GM12878 (cell line): ENCODE measurements at regions of chr9 and their contacts with region 1.

Region 1: GRCh38 chr9:2857564-2858198 is 13.8 kb upstream of the PUM3 start:
- DNase-seq: peak; percentile 37
- ATAC-seq: peak; percentile 98
- H3K4me3 ChIP-seq: no peak overlapping the region
- H3K27ac ChIP-seq: no peak overlapping the region
- H3K4me1 ChIP-seq: no peaks in the 10 kb centered on the region
- H3K27me3 ChIP-seq: peaks cover 0 to 1% of the 10 kb centered on the region in 2 experiments; a peak in 1 of 4 replicates
- CTCF ChIP-seq: peak; percentile 80 to 93 (median 80)
- EP300 ChIP-seq: no peak
- POLR2A ChIP-seq: no peak
- RAD21 ChIP-seq: peak; percentile 76

Region 2: DNA sequence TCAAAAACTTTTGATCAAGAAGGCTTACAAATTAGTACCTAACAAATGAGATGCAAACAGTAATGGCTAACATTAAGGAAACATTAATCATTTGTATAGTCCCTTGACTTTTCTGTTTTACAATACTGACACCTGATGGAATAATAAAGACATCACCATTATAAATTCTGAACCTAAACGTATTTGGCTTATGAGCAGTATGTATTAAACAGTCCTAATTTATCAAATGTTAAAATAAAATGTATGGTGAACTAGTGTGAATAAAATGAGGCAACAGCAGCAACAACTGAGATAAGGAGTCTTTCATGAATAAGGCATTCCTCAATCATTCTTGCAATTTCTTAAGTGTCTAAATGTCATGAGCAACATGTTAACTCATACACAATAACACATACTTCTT is 19.8 kb before region 1 on chr9:
- CTCF ChIA-PET with region 1: interaction called, 25 read pairs
- POLR2A ChIA-PET with region 1: no interaction called
- RAD21 ChIA-PET with region 1: interaction called, 3 read pairs
- SMC1A ChIA-PET with region 1: no interaction called
- in situ Hi-C with region 1: no loop called
- intact Hi-C with region 1: no loop called
- DNase-seq: no peak
- ATAC-seq: peak; percentile 43
- H3K4me3 ChIP-seq: no peak overlapping the region
- H3K27ac ChIP-seq: no peak overlapping the region
- H3K4me1 ChIP-seq: peaks cover 5% of the 10 kb centered on the region
- H3K27me3 ChIP-seq: no peaks in the 10 kb centered on the region
- CTCF ChIP-seq: no peak; a peak in 1 of 6 replicates
- EP300 ChIP-seq: no peak
- POLR2A ChIP-seq: no peak
- RAD21 ChIP-seq: peak; percentile 18; the same call in 1 of the 2 replicates

Region 3: GRCh38 chr9:2846115-2846514 is 11.6 kb before region 1 on chr9:
- CTCF ChIA-PET with region 1: interaction called, 25 read pairs
- POLR2A ChIA-PET with region 1: interaction called, 6 read pairs
- RAD21 ChIA-PET with region 1: interaction called, 9 read pairs
- SMC1A ChIA-PET with region 1: interaction called, 5 read pairs
- in situ Hi-C with region 1: no loop called
- intact Hi-C with region 1: no loop called
- DNase-seq: no peak
- ATAC-seq: no peak
- H3K4me3 ChIP-seq: no peak overlapping the region
- H3K27ac ChIP-seq: no peak overlapping the region
- H3K4me1 ChIP-seq: peaks cover 5% of the 10 kb centered on the region
- H3K27me3 ChIP-seq: no peaks in the 10 kb centered on the region
- CTCF ChIP-seq: no peak
- EP300 ChIP-seq: no peak
- POLR2A ChIP-seq: no peak
- RAD21 ChIP-seq: no peak

Region 4: DNA sequence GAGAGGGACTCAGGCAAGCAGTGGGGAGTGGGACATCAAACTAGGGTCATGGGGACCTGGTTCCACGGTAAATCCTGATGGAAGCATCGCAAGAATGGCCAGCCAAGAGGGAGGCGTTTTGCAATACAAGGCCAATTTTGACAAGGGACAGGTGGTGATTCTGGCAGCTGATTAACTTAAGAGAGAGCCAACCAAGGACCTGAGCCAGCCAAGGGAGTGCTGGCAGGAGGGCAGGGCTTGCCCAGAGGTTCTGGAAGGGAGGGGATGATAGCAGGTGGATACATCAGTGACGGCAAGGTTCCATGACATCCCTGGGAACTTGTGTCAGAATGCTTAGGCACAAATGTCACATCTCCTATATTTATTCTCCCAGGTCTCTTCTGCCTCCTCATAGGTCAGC is 19.0 kb after region 1 on chr9:
- CTCF ChIA-PET with region 1: interaction called, 13 read pairs
- POLR2A ChIA-PET with region 1: interaction called, 5 read pairs
- RAD21 ChIA-PET with region 1: no interaction called
- SMC1A ChIA-PET with region 1: interaction called, 6 read pairs
- in situ Hi-C with region 1: no loop called
- intact Hi-C with region 1: no loop called
- DNase-seq: no peak
- ATAC-seq: no peak
- H3K4me3 ChIP-seq: no peak overlapping the region
- H3K27ac ChIP-seq: no peak overlapping the region
- H3K4me1 ChIP-seq: no peaks in the 10 kb centered on the region
- H3K27me3 ChIP-seq: no peaks in the 10 kb centered on the region; a peak in 1 of 4 replicates
- CTCF ChIP-seq: no peak
- EP300 ChIP-seq: no peak
- POLR2A ChIP-seq: no peak
- RAD21 ChIP-seq: no peak

Region 5: DNA sequence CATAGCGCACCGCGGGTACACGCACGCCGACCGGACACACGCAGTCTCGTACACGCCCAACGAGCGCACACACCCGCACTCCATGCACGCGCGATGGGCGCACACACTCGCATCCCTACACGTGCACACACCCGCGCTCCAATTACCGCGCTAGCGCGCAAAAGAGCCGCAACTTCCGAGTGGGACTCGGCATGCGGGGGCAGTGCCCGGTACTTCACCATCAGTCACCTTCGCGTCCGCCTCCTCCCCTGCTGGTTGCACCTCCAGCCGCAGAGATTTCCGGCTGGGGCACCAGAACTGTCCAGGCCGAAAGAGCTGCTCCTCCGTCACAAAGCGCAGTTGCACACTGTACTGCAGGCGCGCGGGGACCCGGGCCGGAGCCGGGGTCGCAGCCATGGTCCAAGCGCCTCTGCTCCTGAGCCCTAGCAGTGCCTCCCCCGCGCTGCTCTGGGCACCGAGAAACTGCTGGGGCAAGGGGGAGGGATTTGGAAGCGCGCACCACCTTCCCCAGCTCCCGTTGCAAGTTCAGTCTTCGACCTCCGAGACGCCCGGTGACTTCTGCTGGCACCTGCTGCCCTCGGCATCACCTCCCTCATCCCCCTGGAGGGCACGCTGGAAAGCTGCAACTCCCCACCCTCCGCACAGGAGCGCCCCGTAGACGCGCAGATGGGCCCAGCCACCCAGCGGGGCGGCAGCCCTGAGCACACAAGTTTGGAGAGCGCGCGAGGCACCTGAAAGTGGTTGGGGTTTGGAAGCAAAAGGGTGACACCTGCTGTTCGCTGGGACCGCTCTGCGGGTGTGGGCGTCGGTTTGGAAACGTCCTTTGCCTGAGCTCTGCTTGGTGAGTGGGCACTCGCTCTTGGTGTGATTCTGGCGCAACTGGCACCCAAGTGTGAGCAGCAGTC is 323.6 kb after region 1 on chr9:
- CTCF ChIA-PET with region 1: interaction called, 8 read pairs
- POLR2A ChIA-PET with region 1: no interaction called
- RAD21 ChIA-PET with region 1: no interaction called
- SMC1A ChIA-PET with region 1: interaction called, 5 read pairs
- in situ Hi-C with region 1: loop called (anchors 5 kb)
- intact Hi-C with region 1: loop called (anchors 2 kb)
- DNase-seq: no peak
- ATAC-seq: peak; percentile 68
- H3K4me3 ChIP-seq: no peak overlapping the region
- H3K27ac ChIP-seq: no peak overlapping the region
- H3K4me1 ChIP-seq: no peaks in the 10 kb centered on the region
- H3K27me3 ChIP-seq: peaks cover 7 to 9% of the 10 kb centered on the region in 2 experiments
- CTCF ChIP-seq: peak; percentile 24 to 32 (median 30); a peak in 4 of 6 replicates
- EP300 ChIP-seq: no peak
- POLR2A ChIP-seq: no peak
- RAD21 ChIP-seq: peak; percentile 50

Region 6: GRCh38 chr9:4126180-4126865 is 1268.6 kb after region 1 on chr9:
- CTCF ChIA-PET with region 1: no interaction called
- POLR2A ChIA-PET with region 1: no interaction called
- RAD21 ChIA-PET with region 1: no interaction called
- SMC1A ChIA-PET with region 1: no interaction called
- in situ Hi-C with region 1: no loop called
- intact Hi-C with region 1: loop called (anchors 10 kb)
- DNase-seq: no peak
- ATAC-seq: no peak
- H3K4me3 ChIP-seq: no peak overlapping the region
- H3K27ac ChIP-seq: no peak overlapping the region
- H3K4me1 ChIP-seq: no peaks in the 10 kb centered on the region
- H3K27me3 ChIP-seq: no peaks in the 10 kb centered on the region
- CTCF ChIP-seq: no peak
- EP300 ChIP-seq: no peak
- POLR2A ChIP-seq: no peak
- RAD21 ChIP-seq: no peak

Region 7: GRCh38 chr9:4366591-4367330 is 1509.1 kb after region 1 on chr9:
- CTCF ChIA-PET with region 1: interaction called, 11 read pairs
- POLR2A ChIA-PET with region 1: no interaction called
- RAD21 ChIA-PET with region 1: interaction called, 3 read pairs
- SMC1A ChIA-PET with region 1: interaction called, 6 read pairs
- in situ Hi-C with region 1: loop called (anchors 25 kb)
- intact Hi-C with region 1: loop called (anchors 10 kb)
- DNase-seq: no peak
- ATAC-seq: peak; percentile 64
- H3K4me3 ChIP-seq: no peak overlapping the region
- H3K27ac ChIP-seq: no peak overlapping the region
- H3K4me1 ChIP-seq: no peaks in the 10 kb centered on the region
- H3K27me3 ChIP-seq: no peaks in the 10 kb centered on the region
- CTCF ChIP-seq: peak; percentile 73 to 74 (median 73)
- EP300 ChIP-seq: no peak
- POLR2A ChIP-seq: no peak
- RAD21 ChIP-seq: peak; percentile 71